OCI-LY7 (cell line): ENCODE measurements at regions of chr15 and their contacts with region 1.

Region 1: DNA sequence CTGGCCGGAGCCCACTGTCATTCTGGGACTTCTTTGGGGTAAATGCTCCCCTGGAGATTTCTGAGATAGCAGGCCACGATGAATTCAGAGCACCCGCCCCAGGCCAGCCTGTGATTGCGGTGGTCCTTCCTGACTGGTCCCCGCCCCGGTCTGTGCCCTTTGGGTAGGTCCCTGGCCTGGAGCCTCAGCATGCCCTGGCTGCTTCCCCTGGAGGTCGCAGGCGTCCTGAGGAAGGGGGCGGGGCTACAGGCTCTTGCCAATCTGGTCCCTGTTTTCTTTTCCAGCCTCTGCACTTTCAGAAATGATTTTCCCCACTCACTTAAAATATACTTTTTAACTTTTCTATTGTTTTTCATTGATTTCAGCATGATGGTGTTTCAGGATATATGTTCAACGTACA is 250.2 kb upstream of the ATP10A start:
- DNase-seq: no peak
- H3K4me3 ChIP-seq: no peak overlapping the region
- H3K27ac ChIP-seq: no peak overlapping the region
- H3K4me1 ChIP-seq: no peaks in the 10 kb centered on the region
- CTCF ChIP-seq: no peak

Region 2: DNA sequence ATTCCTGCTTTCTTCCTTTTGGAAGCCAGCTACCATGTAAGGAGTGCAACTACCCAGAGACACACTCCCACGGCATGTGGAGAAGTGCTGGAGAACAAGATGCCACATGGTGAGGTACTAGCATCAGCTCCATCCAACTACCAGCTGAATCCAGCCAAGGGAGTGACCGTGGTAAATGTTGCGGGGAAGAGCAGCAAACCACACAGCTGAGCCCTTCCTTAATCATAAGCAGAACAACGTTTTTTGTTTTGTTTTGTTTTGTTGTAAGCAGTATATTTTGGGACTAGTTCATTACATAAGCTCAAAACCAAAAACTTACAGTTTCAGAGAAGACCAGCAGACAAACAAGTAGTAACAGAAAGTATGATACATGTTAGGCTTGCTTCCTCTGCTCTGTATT is 37.5 kb before region 1 on chr15:
- CTCF ChIA-PET with region 1: no interaction called
- POLR2A ChIA-PET with region 1: no interaction called
- intact Hi-C with region 1: loop called (anchors 5 kb)
- DNase-seq: no peak
- H3K4me3 ChIP-seq: no peak overlapping the region
- H3K27ac ChIP-seq: no peak overlapping the region
- H3K4me1 ChIP-seq: no peaks in the 10 kb centered on the region
- CTCF ChIP-seq: no peak